ENCODE measurements at regions of chr16 and their contacts with region 1.

Region 1: DNA sequence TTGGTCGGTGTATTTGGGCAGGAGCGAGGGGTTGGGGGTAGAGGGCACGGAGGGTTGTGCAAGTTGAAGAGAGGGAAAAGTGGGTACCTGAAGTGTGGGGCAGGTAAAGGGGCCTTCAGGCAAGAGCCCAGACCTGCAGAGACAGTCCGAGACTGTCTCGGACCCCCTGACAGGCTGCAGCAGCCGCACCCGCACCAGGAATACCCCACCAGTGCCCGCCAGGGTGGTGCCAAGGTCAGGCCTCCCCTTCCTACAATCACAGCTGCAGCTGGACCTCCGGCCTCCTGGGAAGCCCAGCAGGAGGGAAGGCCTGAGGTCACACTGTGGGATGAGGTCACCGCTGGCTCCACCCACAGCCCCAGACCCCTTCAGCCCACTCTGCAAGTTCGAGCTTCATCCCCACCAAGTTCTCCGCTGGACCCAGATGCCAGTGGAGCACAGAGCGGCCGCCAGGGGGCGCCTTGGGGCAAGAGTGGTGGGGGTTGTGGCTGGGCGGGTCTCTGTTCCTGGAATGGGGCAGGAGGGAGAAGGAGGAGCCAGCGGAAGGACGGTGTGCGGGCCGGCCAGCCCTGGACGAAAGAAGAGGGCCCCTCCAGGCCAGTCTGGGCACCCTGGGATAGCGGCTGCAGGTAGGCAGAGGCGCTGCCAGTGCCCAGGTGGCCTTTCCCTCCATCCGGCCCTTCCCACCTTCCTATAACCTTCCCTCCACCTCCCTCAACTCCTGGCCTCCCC is at the start of gene HSD3B7:
- DNase-seq: peak; percentile 68
- ATAC-seq: peak; percentile 94
- H3K4me3 ChIP-seq: peak within 1 kb of the TSS; percentile 47
- H3K27ac ChIP-seq: peak within 1 kb of the TSS; percentile 40
- H3K4me1 ChIP-seq: peaks cover 8% of the 10 kb centered on the region
- H3K27me3 ChIP-seq: no peaks in the 10 kb centered on the region
- CTCF ChIP-seq: peak; percentile 91
- POLR2A ChIP-seq: peak; percentile 36; the same call in 1 of the 2 replicates
- RAD21 ChIP-seq: peak; percentile 89
- total RNA-seq, gene HSD3B7: 9.4 and 11.3 TPM in 2 replicates

Region 2: DNA sequence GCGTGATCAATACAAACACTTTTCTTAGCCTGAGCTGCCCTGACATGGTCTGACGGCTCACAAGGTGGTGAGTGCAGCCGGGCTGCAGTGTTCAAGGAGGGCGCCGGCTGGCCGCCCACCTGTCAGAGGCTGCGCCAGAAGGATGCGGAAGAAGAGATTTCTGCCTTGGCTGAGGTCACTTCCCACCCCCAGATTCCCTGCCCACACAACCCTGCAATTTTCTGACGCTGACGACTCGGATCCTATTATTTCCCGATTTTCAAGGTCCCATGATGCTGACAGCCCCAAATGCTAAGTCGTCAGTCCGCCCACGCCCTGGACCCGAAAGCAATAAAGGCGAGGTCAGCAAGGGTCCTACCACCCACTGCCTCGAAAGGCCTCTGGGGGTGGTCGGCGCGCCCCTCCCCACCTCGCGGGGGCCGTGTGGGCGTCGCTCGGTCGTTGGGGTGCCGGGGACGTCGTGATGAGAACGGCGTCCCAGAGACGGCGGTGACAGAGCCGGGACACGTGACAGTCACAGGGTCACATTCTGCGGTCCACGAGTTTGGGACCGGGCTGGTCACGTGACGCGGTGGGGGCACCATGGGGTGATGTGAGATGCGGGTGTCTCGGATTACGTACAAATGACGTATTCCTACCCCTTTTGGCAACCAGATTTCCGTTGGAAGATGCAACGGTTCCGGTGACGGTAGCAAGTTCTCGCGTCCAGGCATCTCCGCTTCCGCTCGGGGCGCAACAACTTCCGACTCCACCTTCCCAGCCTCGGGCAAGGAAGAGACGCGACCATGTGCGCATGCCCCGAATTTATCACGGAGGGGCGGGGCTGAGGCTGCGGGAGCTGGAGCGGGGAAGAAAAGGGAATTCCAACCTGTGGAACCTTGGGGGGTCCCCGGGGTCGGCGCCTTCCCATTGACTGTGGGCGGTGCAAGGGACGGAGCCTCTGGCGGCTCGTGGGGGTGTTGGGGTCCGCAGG is 48.2 kb after region 1 on chr16 and contains the start of gene STX4:
- CTCF ChIA-PET with region 1: no interaction called
- POLR2A ChIA-PET with region 1: no interaction called
- dilution Hi-C with region 1: no loop called
- in situ Hi-C with region 1: no loop called
- intact Hi-C with region 1: loop called (anchors 1 kb)
- DNase-seq: peak; percentile 98
- ATAC-seq: peak; percentile 89
- H3K4me3 ChIP-seq: peak within 1 kb of the TSS; percentile 58
- H3K27ac ChIP-seq: peak within 1 kb of the TSS; percentile 68
- H3K4me1 ChIP-seq: peaks cover 7% of the 10 kb centered on the region
- H3K27me3 ChIP-seq: no peaks in the 10 kb centered on the region
- CTCF ChIP-seq: no peak
- POLR2A ChIP-seq: peak; percentile 60; the same call in 1 of the 2 replicates
- RAD21 ChIP-seq: 0 out of 2 replicates have a peak, but pooled peaks have one; percentile 4
- total RNA-seq, gene STX4: 23.5 and 25.0 TPM in 2 replicates

Region 3: DNA sequence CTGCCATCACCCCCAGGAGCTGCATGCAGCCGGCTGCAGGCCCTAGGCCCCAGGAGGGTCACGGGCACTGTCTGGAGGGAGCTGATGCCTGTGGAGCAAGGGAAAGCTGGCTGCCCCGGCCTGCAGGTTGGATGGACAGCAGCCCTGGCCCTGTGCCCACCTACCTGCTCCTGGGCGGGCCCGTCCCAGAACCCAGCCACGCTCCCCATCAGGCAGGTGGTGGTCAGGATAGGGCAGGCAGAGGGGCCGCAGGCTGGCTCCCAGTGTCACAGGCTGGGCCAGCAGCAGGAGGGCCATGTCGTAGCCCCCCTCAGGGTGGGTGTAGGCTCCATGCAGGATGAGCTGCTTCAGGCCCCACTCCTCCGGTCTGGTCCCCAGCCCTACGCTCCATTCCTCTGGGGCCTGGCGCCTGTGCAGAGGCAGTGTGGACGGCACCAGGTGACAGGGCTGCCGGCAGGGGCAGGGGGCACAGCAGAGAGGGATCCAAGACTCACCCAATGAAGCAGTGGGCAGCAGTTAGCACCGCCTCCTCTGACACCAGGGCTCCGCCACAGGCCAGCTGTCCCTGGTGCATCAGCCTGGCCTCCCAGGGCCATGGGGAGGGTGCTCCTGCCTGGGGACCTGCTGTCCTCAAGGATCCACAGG is 99.9 kb after region 1 on chr16:
- CTCF ChIA-PET with region 1: no interaction called
- POLR2A ChIA-PET with region 1: no interaction called
- dilution Hi-C with region 1: no loop called
- in situ Hi-C with region 1: loop called (anchors 10 kb)
- intact Hi-C with region 1: no loop called
- DNase-seq: no peak
- ATAC-seq: peak; percentile 31
- H3K4me3 ChIP-seq: no peak overlapping the region
- H3K27ac ChIP-seq: no peak overlapping the region
- H3K4me1 ChIP-seq: no peaks in the 10 kb centered on the region
- H3K27me3 ChIP-seq: no peaks in the 10 kb centered on the region
- CTCF ChIP-seq: no peak
- POLR2A ChIP-seq: no peak
- RAD21 ChIP-seq: no peak

Region 4: GRCh38 chr16:31142109-31143010 is 157.5 kb after region 1 on chr16:
- CTCF ChIA-PET with region 1: interaction called, 3 read pairs
- POLR2A ChIA-PET with region 1: interaction called, 3 read pairs
- dilution Hi-C with region 1: no loop called
- in situ Hi-C with region 1: no loop called
- intact Hi-C with region 1: loop called (anchors 1 kb)
- DNase-seq: peak; percentile 98
- ATAC-seq: peak; percentile 98
- H3K4me3 ChIP-seq: peak overlapping the region; percentile 49
- H3K27ac ChIP-seq: peak overlapping the region; percentile 74
- H3K4me1 ChIP-seq: peaks cover 16% of the 10 kb centered on the region
- H3K27me3 ChIP-seq: peaks cover 10% of the 10 kb centered on the region
- CTCF ChIP-seq: peak; percentile 98
- POLR2A ChIP-seq: 0 out of 2 replicates have a peak, but pooled peaks have one; percentile 24
- RAD21 ChIP-seq: peak; percentile 84

Region 5: GRCh38 chr16:31528523-31529397 is 543.9 kb after region 1 on chr16:
- CTCF ChIA-PET with region 1: no interaction called
- POLR2A ChIA-PET with region 1: no interaction called
- dilution Hi-C with region 1: no loop called
- in situ Hi-C with region 1: no loop called
- intact Hi-C with region 1: no loop called
- DNase-seq: peak; percentile 23
- ATAC-seq: peak; percentile 78
- H3K4me3 ChIP-seq: peak overlapping the region; percentile 39
- H3K27ac ChIP-seq: 0 out of 2 replicates have a peak overlapping the region, but pooled peaks have one; percentile 3
- H3K4me1 ChIP-seq: peaks cover 4% of the 10 kb centered on the region; the same call in 1 of the 2 replicates
- H3K27me3 ChIP-seq: peaks cover 25% of the 10 kb centered on the region
- CTCF ChIP-seq: no peak
- POLR2A ChIP-seq: no peak
- RAD21 ChIP-seq: no peak

Region 6: GRCh38 chr16:31868691-31869167 is 883.9 kb after region 1 on chr16:
- CTCF ChIA-PET with region 1: interaction called, 4 read pairs
- POLR2A ChIA-PET with region 1: no interaction called
- dilution Hi-C with region 1: no loop called
- in situ Hi-C with region 1: loop called (anchors 10 kb)
- intact Hi-C with region 1: no loop called
- DNase-seq: peak; percentile 72
- ATAC-seq: peak; percentile 79
- H3K4me3 ChIP-seq: no peak overlapping the region
- H3K27ac ChIP-seq: no peak overlapping the region
- H3K4me1 ChIP-seq: peaks cover 6% of the 10 kb centered on the region
- H3K27me3 ChIP-seq: peaks cover 12% of the 10 kb centered on the region
- CTCF ChIP-seq: peak; percentile 76
- POLR2A ChIP-seq: no peak
- RAD21 ChIP-seq: peak; percentile 74